Left colon (tissue), 2 donors: ENCODE measurements at regions of chr19 and their contacts with region 1.

Region 1: GRCh38 chr19:50779504-50780457 is 9.5 kb downstream of the GPR32 start:
- DNase-seq: no peak
- ATAC-seq: no peak

Region 2: DNA sequence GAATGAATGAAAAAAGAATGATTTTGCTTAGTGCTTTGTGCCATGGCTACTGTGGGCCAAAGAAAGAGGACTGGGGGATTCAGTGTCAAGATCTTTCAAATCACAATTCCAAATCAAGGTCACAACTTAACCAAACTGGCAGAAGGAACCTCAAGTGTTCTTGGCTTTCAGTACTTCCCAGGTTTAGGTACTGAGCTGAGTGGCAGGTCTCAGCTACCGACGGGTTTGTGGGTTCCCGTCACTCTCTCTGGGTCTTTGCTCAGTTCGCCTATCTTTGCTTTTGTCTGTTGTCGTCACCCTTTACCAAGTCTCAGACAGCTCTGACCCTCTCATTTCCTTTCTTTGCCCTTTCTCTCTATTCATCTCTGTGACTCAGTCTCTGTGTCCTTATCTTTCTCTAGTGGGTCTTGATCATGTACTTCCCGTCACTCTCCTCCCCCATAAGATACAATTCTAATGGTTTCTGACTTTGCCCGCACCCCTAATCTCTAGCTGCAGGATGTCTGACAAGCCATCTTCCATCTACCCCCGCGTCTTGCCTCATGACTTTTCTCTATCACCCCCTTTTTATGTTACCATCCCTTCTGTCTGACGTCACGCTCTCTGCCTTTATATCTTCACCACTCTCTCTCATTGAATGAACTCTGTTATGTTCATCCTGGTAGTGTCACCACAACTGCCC is 178.2 kb before region 1 on chr19:
- intact Hi-C with region 1: no loop called
- DNase-seq: no peak
- ATAC-seq: no peak

Region 3: DNA sequence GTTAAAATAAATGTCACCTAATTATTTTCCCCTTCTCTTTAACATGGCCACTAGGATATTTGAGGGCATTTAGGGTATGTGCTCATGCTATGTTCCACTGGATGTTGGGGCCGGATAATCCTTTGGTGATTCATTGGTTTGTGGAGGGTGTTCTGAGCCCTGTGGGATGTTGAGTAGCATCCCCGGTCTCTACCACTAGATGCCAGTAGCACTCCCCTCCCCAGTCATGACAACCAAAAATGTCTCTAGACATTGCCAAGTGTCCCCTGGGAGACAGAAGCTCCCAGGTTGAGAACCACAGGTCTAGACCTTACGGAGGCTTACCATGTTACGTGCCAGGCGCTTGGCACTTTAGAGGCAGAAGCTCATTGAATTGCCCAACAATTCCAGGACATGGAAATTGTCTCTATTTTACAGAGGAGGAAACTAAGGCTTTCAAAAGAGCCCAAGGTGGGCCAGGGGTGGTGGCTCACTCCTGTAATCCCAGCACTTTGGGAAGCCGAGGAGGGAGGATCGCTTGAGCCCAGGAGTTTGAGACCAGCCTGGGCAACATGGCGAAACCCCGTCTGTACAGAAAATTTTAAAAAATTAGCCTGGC is 74.3 kb before region 1 on chr19:
- intact Hi-C with region 1: loop called in 1 of 2 experiments (anchors 10 kb)
- DNase-seq: no peak
- ATAC-seq: peak; percentile 49